ENCODE measurements at regions of chr13 and their contacts with region 1.

Region 1: GRCh38 chr13:46181840-46182490 is at the start of gene LCP1:
- DNase-seq: peak; percentile 40
- H3K4me3 Mint-ChIP-seq: peak within 1 kb of the TSS; percentile 55
- H3K27ac Mint-ChIP-seq: peak within 1 kb of the TSS; percentile 40
- H3K4me1 Mint-ChIP-seq: peaks cover 17% of the 10 kb centered on the region
- H3K27me3 Mint-ChIP-seq: no peaks in the 10 kb centered on the region
- CTCF ChIP-seq: no peak
- total RNA-seq, gene LCP1: 54.6 and 58.6 TPM in 2 replicates

Region 2: GRCh38 chr13:46207828-46208227 is 25.9 kb after region 1 on chr13:
- CTCF ChIA-PET with region 1: interaction called, 5 read pairs
- intact Hi-C with region 1: loop called (anchors 2 kb)
- DNase-seq: peak; percentile 41
- H3K4me3 Mint-ChIP-seq: no peak overlapping the region
- H3K27ac Mint-ChIP-seq: peak overlapping the region; percentile 68
- H3K4me1 Mint-ChIP-seq: peaks cover 29% of the 10 kb centered on the region
- H3K27me3 Mint-ChIP-seq: no peaks in the 10 kb centered on the region
- CTCF ChIP-seq: no peak